Prostate gland (tissue), 2 donors: ENCODE measurements at regions of chr15 and their contacts with region 1.

Region 1: DNA sequence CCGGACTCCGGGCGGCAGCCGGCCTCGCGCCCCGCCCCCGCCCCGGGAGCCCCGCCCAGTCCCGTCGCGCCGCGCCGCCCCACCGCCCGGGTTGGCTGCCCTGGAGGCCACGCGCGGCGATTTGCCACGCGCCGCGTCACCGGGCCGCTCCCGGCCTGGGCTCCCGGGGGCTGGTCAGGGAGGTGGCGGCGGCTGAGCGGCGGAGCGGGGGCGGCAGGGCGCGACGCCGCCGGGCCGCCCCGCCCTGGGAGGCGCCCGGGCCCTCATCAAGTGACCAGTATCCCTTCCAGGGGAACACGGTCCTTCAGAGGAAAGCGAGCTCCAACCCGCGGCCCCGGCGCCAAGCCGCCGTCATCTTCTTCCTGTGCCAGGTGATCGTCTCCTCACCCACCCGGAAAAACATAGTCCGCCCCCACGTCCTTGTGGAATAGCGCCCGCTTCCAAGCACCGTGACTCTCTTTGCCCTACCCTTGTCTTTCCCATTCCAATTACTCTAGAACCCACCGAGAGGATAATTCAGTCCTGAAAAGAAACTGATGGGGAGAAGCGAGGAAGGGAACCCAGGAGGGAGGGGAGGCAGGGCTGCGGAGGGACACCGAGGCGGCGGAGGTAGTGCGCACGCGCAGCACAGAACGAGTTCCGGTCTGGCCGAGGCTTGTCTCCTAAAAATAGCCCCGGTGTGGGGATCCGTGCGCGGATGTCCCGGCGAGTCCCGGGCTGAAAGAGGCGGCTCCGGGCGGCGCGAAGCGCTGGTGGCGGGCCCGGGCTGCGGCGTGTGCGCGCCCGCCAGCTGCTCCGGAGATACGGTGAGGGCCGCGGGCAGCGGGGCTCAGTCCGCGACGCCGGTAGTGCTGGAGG is at the start of gene MEF2A:
- DNase-seq: peak; percentile 93
- H3K4me3 ChIP-seq: peak within 1 kb of the TSS; percentile 97 to 98
- H3K27ac ChIP-seq: peak within 1 kb of the TSS; percentile 98 to 99
- H3K4me1 ChIP-seq: peaks cover 4% of the 10 kb centered on the region
- H3K27me3 ChIP-seq: no peaks in the 10 kb centered on the region
- CTCF ChIP-seq: peak in 2 of 4 experiments; percentile 4 to 5
- POLR2A ChIP-seq: peak; percentile 87
- total RNA-seq, gene MEF2A: 40.1 to 68.0 TPM

Region 2: GRCh38 chr15:99104788-99105513 is 460.6 kb before region 1 on chr15 and contains the start of gene SYNM:
- intact Hi-C with region 1: loop called (anchors 10 kb)
- DNase-seq: peak; percentile 63
- H3K4me3 ChIP-seq: peak within 1 kb of the TSS; percentile 50 to 51
- H3K27ac ChIP-seq: peak within 1 kb of the TSS; percentile 77 to 83
- H3K4me1 ChIP-seq: no peaks in the 10 kb centered on the region
- H3K27me3 ChIP-seq: no peaks in the 10 kb centered on the region
- CTCF ChIP-seq: peak; percentile 72 to 94 (median 88)
- POLR2A ChIP-seq: peak; percentile 50
- total RNA-seq, gene SYNM: 181 to 185 TPM

Region 3: GRCh38 chr15:99296386-99296785 is 269.1 kb before region 1 on chr15:
- intact Hi-C with region 1: loop called (anchors 10 kb)
- DNase-seq: no peak
- H3K4me3 ChIP-seq: no peak overlapping the region
- H3K27ac ChIP-seq: no peak overlapping the region
- H3K4me1 ChIP-seq: no peaks in the 10 kb centered on the region
- H3K27me3 ChIP-seq: no peaks in the 10 kb centered on the region
- CTCF ChIP-seq: no peak
- POLR2A ChIP-seq: no peak

Region 4: GRCh38 chr15:99371180-99372103 is 194.1 kb before region 1 on chr15:
- intact Hi-C with region 1: no loop called
- DNase-seq: no peak
- H3K4me3 ChIP-seq: no peak overlapping the region
- H3K27ac ChIP-seq: no peak overlapping the region
- H3K4me1 ChIP-seq: no peaks in the 10 kb centered on the region
- H3K27me3 ChIP-seq: no peaks in the 10 kb centered on the region
- CTCF ChIP-seq: no peak
- POLR2A ChIP-seq: no peak

Region 5: GRCh38 chr15:99476413-99477222 is 88.9 kb before region 1 on chr15:
- intact Hi-C with region 1: loop called (anchors 5 kb)
- DNase-seq: peak; percentile 79
- H3K4me3 ChIP-seq: no peak overlapping the region
- H3K27ac ChIP-seq: peak overlapping the region; percentile 54 to 64
- H3K4me1 ChIP-seq: no peaks in the 10 kb centered on the region
- H3K27me3 ChIP-seq: no peaks in the 10 kb centered on the region
- CTCF ChIP-seq: no peak
- POLR2A ChIP-seq: peak; percentile 14

Region 6: GRCh38 chr15:99507504-99508310 is 57.8 kb before region 1 on chr15:
- intact Hi-C with region 1: loop called (anchors 2 kb)
- DNase-seq: peak; percentile 25
- H3K4me3 ChIP-seq: no peak overlapping the region
- H3K27ac ChIP-seq: peak overlapping the region; percentile 26 to 56
- H3K4me1 ChIP-seq: no peaks in the 10 kb centered on the region
- H3K27me3 ChIP-seq: no peaks in the 10 kb centered on the region
- CTCF ChIP-seq: no peak
- POLR2A ChIP-seq: no peak

Region 7: DNA sequence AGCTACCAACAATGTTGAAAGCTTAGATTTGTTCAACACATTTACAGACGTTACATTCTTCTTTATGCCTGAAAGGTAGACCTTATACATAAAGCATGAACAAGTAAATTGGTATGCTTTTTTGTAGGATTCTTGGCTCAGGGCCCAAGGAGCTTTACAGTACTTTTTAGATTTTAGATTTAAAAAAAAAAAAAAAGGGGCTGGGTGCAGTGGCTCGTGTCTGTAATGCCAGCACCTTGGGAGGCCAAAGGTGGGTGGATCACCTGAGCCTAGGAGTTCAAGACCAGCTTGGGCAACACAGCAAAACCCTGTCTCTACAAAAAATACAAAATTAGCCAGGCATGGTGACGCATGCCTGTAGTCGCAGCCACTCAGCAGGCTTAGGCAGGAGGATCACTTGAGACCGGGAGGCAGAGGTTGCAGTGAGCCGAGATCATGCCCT is 40.0 kb after region 1 on chr15:
- intact Hi-C with region 1: no loop called
- DNase-seq: no peak
- H3K4me3 ChIP-seq: no peak overlapping the region
- H3K27ac ChIP-seq: no peak overlapping the region
- H3K4me1 ChIP-seq: no peaks in the 10 kb centered on the region
- H3K27me3 ChIP-seq: no peaks in the 10 kb centered on the region
- CTCF ChIP-seq: no peak
- POLR2A ChIP-seq: no peak

Region 8: DNA sequence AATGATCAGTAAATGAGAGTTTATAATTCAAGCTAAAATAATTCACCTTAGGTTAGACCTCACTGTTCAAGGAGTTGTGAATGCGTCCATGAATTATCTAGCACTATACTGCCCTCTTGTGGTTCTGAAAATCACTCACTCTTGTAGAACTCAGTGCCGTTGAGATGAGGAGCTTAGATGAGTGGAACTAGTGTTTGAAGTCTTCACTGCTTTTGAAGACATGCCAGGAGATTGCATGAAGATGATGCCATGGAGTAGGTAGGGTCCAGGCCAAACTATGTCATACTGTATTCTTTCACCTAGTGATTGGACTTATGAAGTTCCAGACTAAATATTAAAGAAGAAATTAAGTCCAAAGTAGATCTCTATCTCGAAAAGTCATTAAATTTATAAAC is 138.9 kb after region 1 on chr15:
- intact Hi-C with region 1: loop called (anchors 5 kb)
- DNase-seq: peak; percentile 76
- H3K4me3 ChIP-seq: no peak overlapping the region
- H3K27ac ChIP-seq: peak overlapping the region in 1 of 2 donors; percentile 36
- H3K4me1 ChIP-seq: no peaks in the 10 kb centered on the region
- H3K27me3 ChIP-seq: no peaks in the 10 kb centered on the region
- CTCF ChIP-seq: peak; percentile 36 to 88 (median 84)
- POLR2A ChIP-seq: no peak